ENCODE measurements at regions of chr9 and their contacts with region 1.

Region 1: DNA sequence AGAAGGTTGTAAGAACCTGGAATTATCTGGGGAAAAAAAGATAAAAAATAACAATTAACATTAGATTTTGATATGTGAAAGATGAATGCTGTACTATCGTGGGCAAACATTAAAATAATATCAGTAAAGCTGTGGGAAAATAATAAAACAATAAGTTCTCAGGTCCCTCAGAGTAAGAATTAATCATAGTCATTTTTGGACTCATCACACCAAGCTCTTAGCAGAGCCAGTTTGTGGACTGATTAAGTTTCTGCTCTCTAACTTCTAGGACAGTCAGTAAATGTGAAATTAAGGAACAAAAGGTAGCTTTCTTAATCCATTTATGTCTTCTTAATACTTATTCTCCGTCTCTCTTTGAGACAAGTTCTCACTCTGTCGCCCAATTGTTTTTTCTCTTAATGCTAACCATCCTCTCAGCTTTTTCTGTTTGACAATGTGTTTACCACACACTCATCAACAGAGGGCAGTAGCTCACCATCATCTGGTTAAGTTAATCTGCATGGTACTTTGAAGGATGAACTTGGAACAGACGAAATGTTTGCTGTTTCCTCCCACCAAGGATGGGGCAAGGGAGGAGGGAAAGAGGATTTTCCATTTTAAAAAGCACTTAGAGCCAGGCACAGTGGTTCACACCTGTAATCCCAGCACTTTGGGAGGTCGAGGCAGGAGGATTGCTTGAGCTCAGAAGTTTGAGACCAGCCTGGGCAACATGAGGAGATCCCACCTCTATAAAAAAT is 5.3 kb upstream of the ACO1 start:
- DNase-seq: peak; percentile 59
- H3K4me3 ChIP-seq: no peak overlapping the region
- H3K27ac ChIP-seq: no peak overlapping the region
- H3K4me1 ChIP-seq: no peaks in the 10 kb centered on the region
- H3K27me3 ChIP-seq: no peaks in the 10 kb centered on the region
- CTCF ChIP-seq: peak; percentile 62

Region 2: GRCh38 chr9:32431940-32432555 is 52.9 kb after region 1 on chr9:
- intact Hi-C with region 1: loop called (anchors 5 kb)
- DNase-seq: peak; percentile 40
- H3K4me3 ChIP-seq: no peak overlapping the region
- H3K27ac ChIP-seq: no peak overlapping the region
- H3K4me1 ChIP-seq: no peaks in the 10 kb centered on the region
- H3K27me3 ChIP-seq: no peaks in the 10 kb centered on the region
- CTCF ChIP-seq: peak; percentile 46

Region 3: DNA sequence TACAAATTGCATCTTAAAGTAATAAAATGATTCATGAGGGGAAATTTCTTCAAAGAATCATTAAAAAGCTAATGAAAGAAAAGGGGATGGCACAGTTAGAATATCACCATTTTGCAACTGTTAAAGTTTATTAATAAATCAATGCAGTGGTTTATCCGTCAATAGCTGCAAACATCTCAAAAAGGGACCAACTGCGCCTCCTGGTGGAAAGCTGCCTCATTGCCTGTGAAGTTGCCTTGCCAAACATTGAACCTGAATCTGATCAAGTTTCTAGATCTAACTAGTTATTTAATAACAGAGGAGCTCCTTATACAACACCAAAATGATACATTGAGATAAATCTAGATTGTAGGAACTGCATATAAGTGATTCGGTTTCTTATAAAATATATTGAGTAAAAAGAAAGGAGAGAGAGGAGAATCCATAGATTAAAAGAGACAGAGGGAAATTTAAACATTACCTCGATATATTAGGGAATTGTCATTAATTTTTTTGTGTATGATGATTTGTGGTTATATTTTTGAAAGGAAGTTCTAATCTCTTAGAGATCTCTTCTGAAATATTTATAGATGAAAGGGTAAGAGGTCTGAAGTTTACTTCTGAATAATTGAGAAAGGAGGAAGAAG is 200.7 kb after region 1 on chr9:
- intact Hi-C with region 1: loop called (anchors 2 kb)
- DNase-seq: peak; percentile 75
- H3K4me3 ChIP-seq: no peak overlapping the region
- H3K27ac ChIP-seq: no peak overlapping the region
- H3K4me1 ChIP-seq: no peaks in the 10 kb centered on the region
- H3K27me3 ChIP-seq: no peaks in the 10 kb centered on the region
- CTCF ChIP-seq: peak; percentile 89

Region 4: DNA sequence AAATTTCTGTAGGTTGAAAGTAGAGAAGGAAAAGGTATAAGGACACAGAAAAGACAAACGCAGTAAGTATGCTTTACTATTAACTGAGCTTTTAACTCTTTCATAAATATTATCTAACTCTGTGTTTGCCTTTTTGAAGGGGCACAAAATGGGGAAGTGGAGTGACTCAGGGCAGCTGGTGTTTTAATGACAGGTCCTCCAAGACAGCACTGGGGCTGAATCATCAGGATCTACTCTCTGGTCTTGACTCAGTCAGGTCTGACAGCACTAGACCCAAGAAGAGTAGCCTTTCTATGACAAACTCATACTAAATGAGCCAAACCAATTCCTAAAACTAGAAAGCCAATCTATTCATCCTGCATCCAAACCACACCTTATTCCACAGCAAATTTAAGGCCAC is 520.0 kb after region 1 on chr9:
- intact Hi-C with region 1: no loop called
- DNase-seq: no peak
- H3K4me3 ChIP-seq: no peak overlapping the region
- H3K27ac ChIP-seq: no peak overlapping the region
- H3K4me1 ChIP-seq: no peaks in the 10 kb centered on the region
- H3K27me3 ChIP-seq: no peaks in the 10 kb centered on the region
- CTCF ChIP-seq: no peak

Region 5: DNA sequence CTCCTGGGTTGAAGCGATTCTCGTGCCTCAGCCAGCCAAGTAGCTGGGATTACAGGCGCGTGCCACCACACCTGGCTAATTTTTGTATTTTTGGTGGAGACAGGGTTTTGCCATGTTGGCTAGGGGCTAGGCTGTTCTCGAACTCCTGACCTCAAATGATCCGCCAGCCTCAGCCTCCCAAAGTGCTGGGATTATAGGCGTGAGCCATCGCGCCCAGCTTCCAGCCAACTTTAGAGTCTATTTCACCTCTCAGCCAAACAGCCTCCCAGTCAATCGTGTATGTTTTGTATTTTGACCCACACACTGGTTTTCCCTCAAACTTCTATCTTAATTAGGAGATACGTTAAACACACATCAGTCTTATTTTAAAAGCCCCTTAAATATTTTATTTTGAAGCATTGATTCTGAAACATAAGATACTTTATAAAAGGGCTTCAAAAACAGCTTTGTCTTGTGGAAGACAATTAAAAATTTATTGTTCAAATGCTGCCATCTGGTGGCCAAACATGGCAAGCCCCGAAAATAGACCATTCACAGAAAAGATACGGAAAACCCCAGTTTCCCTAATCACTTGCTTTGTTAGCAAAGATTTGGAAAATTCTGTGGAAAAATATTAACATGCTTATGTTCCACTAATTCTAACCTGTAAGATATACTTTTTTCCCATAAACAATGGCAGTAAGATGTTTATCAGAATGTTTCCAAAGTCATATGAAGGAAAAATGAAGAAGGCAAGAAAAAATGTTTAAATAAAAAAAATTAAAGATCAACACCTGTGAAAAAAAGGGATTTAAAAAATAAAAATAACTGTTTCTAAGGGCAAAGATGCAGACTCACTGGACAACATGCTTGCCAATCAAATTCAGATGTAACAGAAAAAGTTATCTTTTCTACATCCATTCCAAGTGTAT is 589.2 kb after region 1 on chr9:
- intact Hi-C with region 1: loop called (anchors 5 kb)
- DNase-seq: peak; percentile 63
- H3K4me3 ChIP-seq: no peak overlapping the region
- H3K27ac ChIP-seq: no peak overlapping the region
- H3K4me1 ChIP-seq: no peaks in the 10 kb centered on the region
- H3K27me3 ChIP-seq: no peaks in the 10 kb centered on the region
- CTCF ChIP-seq: peak; percentile 88

Region 6: GRCh38 chr9:33065157-33066076 is 686.3 kb after region 1 on chr9:
- intact Hi-C with region 1: no loop called
- DNase-seq: no peak
- H3K4me3 ChIP-seq: no peak overlapping the region
- H3K27ac ChIP-seq: no peak overlapping the region
- H3K4me1 ChIP-seq: no peaks in the 10 kb centered on the region
- H3K27me3 ChIP-seq: no peaks in the 10 kb centered on the region
- CTCF ChIP-seq: no peak

Measured in colonic mucosa (tissue), 4 donors.